ENCODE measurements at regions of chr12 and their contacts with region 1.

Region 1: GRCh38 chr12:45543906-45544315 is 185.6 kb upstream of the ARID2 start:
- DNase-seq: no peak
- H3K4me3 ChIP-seq: no peak overlapping the region
- H3K27ac ChIP-seq: no peak overlapping the region
- H3K4me1 ChIP-seq: no peaks in the 10 kb centered on the region
- H3K27me3 ChIP-seq: no peaks in the 10 kb centered on the region
- CTCF ChIP-seq: peak; percentile 43 to 68 (median 52)
- EP300 ChIP-seq: no peak
- POLR2A ChIP-seq: no peak

Region 2: DNA sequence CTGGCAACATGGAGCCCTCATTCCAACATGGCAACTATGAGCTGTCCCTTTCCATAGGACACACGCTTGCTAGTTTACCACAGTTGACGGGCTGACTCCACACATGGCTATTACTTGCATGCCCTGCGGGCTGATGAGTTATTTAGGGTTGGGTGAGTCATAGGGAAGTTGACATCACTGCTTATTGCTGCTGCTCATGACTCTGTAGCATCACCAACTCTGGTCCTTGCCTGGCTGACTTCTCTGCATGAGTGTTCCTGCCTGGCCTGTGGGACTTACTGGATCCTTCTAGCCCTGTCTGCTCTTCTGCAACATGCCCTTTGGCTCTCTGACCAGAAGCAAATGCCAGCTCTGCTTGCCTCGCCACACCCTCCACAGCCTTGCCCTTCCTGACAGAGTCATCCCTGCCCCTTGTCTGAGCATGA is 128.5 kb before region 1 on chr12:
- intact Hi-C with region 1: no loop called
- DNase-seq: peak; percentile 64
- H3K4me3 ChIP-seq: no peak overlapping the region
- H3K27ac ChIP-seq: peak overlapping the region in 2 of 4 donors; percentile 23 to 64
- H3K4me1 ChIP-seq: peaks cover 0 to 4% (median 0%) of the 10 kb centered on the region in 4 donors
- H3K27me3 ChIP-seq: no peaks in the 10 kb centered on the region
- CTCF ChIP-seq: no peak
- EP300 ChIP-seq: peak in 1 of 4 donors; percentile 63
- POLR2A ChIP-seq: no peak

Region 3: GRCh38 chr12:45720069-45720468 is 176.2 kb after region 1 on chr12:
- intact Hi-C with region 1: loop called (anchors 5 kb)
- DNase-seq: no peak
- H3K4me3 ChIP-seq: no peak overlapping the region
- H3K27ac ChIP-seq: no peak overlapping the region
- H3K4me1 ChIP-seq: peaks cover 0 to 57% (median 48%) of the 10 kb centered on the region in 4 donors
- H3K27me3 ChIP-seq: no peaks in the 10 kb centered on the region
- CTCF ChIP-seq: no peak
- EP300 ChIP-seq: no peak
- POLR2A ChIP-seq: no peak

Measured in sigmoid colon (tissue), 7 donors.